ENCODE measurements at regions of chr2 and their contacts with region 1.

Region 1: GRCh38 chr2:446963-447530 is 159.2 kb upstream of the ALKAL2 start:
- DNase-seq: no peak
- H3K4me3 ChIP-seq: no peak overlapping the region
- CTCF ChIP-seq: no peak
- POLR2A ChIP-seq: no peak

Region 2: GRCh38 chr2:509888-510287 is 62.8 kb after region 1 on chr2:
- intact Hi-C with region 1: loop called (anchors 2 kb)
- DNase-seq: peak in 1 of 2 donors; percentile 39
- H3K4me3 ChIP-seq: no peak overlapping the region
- CTCF ChIP-seq: no peak
- POLR2A ChIP-seq: no peak